K562 (cell line): ENCODE measurements at regions of chr7 and their contacts with region 1.

Region 1: DNA sequence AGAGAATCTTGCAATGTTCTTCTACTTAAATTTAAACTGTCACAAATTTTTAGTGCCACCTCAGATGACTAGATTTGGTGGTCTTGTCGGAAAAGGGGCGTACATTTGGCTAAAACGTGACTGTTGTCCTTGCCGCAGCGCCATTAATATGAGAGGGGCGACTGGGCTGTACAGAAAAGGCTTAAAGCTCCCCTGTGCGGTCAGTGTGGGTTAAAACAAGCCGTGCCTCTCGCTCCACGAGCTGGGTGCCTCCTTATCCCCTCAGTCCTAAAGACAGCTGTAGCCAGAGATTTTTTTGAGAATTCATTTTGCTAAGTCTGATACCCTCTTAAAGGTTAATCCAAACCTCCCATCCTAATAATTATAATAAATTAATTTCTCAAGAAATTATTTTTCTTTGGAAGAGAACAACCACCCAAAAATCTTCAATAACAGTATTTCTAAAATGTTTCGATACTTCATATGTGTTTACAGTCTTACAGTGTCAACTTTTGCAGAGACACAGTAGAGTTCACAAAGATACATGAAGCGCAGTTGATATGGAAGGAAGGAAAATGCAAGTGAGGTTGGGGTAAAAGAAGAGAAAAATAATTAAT is 68.6 kb downstream of the C7orf25 start:
- DNase-seq: peak; percentile 22 to 69 (median 44)
- ATAC-seq: peak; percentile 100
- H3K4me3 ChIP-seq: no peak overlapping the region
- H3K27ac ChIP-seq: no peak overlapping the region
- H3K4me1 ChIP-seq: no peaks in the 10 kb centered on the region
- H3K27me3 ChIP-seq: peaks cover 0 to 9% of the 10 kb centered on the region in 2 experiments; a peak in 1 of 5 replicates
- CTCF ChIP-seq: peak; percentile 72 to 81 (median 75)
- EP300 ChIP-seq: no peak
- POLR2A ChIP-seq: no peak
- RAD21 ChIP-seq: peak; percentile 74 to 79

Region 2: DNA sequence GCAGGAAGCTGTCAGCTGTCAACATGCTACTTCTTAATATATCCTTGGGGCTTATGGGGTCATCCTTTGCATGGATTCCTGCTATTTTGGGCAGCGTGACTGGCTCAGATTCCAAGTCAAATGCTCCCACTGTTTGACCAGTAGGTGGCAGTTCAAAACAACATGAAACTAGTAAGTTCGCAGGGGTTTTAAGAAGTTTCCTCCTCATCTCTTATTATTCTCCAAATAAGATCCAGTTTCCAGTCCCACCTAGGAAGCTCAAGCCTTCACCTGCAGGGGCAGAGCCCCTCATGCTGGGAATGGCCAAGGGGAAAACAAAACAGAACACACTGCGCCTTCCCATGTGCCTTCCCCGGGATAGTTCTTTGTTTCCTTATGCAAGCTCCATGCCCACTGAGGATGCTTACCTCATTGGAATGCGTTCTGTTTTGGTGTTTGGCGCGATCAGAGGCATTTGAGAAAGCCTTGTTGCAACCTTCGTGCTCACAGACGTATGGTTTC is 866.1 kb before region 1 on chr7:
- CTCF ChIA-PET with region 1: interaction called, 3 read pairs
- POLR2A ChIA-PET with region 1: no interaction called
- in situ Hi-C with region 1: no loop called
- intact Hi-C with region 1: loop called (anchors 1 kb)
- DNase-seq: peak in 3 of 4 experiments; percentile 14 to 37 (median 31)
- ATAC-seq: peak; percentile 62; the same call in 1 of the 3 replicates
- H3K4me3 ChIP-seq: no peak overlapping the region
- H3K27ac ChIP-seq: no peak overlapping the region
- H3K4me1 ChIP-seq: no peaks in the 10 kb centered on the region
- H3K27me3 ChIP-seq: peaks cover 0 to 2% of the 10 kb centered on the region in 2 experiments; a peak in 2 of 5 replicates
- CTCF ChIP-seq: peak; percentile 43 to 69 (median 55)
- EP300 ChIP-seq: no peak
- POLR2A ChIP-seq: no peak
- RAD21 ChIP-seq: peak; percentile 46 to 51

Region 3: DNA sequence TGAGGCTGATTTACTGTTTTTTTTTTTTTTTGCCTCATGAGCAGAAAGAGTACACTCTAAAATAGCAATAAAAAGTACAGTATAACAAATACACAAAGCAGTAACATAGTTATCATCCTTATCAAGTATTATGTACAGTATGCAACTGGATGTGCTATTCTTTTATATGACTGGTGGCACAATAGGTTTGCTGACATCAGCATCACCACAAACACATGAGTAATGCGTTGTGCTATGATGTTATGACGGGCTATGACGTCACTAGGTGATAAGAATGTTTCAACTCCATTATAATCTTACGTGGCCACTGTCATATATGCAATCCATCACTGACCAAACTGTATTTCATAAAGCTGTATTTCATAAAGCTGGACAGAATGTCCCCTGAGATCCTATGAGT is 417.1 kb before region 1 on chr7:
- CTCF ChIA-PET with region 1: no interaction called
- POLR2A ChIA-PET with region 1: no interaction called
- in situ Hi-C with region 1: no loop called
- intact Hi-C with region 1: no loop called
- DNase-seq: no peak
- ATAC-seq: no peak
- H3K4me3 ChIP-seq: no peak overlapping the region
- H3K27ac ChIP-seq: no peak overlapping the region
- H3K4me1 ChIP-seq: no peaks in the 10 kb centered on the region
- H3K27me3 ChIP-seq: no peaks in the 10 kb centered on the region
- CTCF ChIP-seq: no peak
- EP300 ChIP-seq: no peak
- POLR2A ChIP-seq: no peak
- RAD21 ChIP-seq: no peak